ENCODE measurements at regions of chr5 and their contacts with region 1.

Region 1: GRCh38 chr5:81194633-81195333 is 38.3 kb upstream of the CKMT2 start:
- DNase-seq: peak; percentile 89
- ATAC-seq: peak; percentile 99
- H3K4me3 Mint-ChIP-seq: peak overlapping the region; percentile 4
- H3K27ac Mint-ChIP-seq: no peak overlapping the region
- H3K4me1 Mint-ChIP-seq: peaks cover 8% of the 10 kb centered on the region
- H3K27me3 Mint-ChIP-seq: no peaks in the 10 kb centered on the region
- CTCF ChIP-seq: peak; percentile 97

Region 2: DNA sequence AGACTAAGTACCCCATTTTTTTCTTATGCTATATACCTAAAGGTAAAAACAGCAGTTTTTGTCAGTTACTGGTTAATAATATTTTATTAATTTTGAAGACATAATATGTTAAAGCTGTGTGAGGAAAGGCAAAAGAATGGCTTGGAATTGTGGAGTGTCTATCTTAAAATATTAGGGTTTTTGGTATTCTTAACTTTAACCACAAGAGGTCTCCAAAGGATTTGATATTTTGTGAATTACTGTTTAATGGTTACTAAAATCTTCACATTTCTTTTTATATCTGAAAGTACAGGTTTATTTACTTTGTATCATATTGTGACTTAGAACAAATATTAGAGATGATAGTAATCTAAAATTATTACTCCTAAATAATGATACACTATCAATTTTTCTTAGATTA is 508.0 kb before region 1 on chr5:
- CTCF ChIA-PET with region 1: interaction called, 7 read pairs
- POLR2A ChIA-PET with region 1: no interaction called
- intact Hi-C with region 1: loop called (anchors 10 kb)
- DNase-seq: no peak
- ATAC-seq: no peak
- H3K4me3 Mint-ChIP-seq: no peak overlapping the region
- H3K27ac Mint-ChIP-seq: no peak overlapping the region
- H3K4me1 Mint-ChIP-seq: peaks cover 19% of the 10 kb centered on the region
- H3K27me3 Mint-ChIP-seq: no peaks in the 10 kb centered on the region
- CTCF ChIP-seq: peak; percentile 25

Region 3: GRCh38 chr5:81183811-81184748 is 10.7 kb before region 1 on chr5:
- CTCF ChIA-PET with region 1: interaction called, 56 read pairs
- POLR2A ChIA-PET with region 1: no interaction called
- intact Hi-C with region 1: no loop called
- DNase-seq: no peak
- ATAC-seq: no peak
- H3K4me3 Mint-ChIP-seq: no peak overlapping the region
- H3K27ac Mint-ChIP-seq: no peak overlapping the region
- H3K4me1 Mint-ChIP-seq: peaks cover 22% of the 10 kb centered on the region
- H3K27me3 Mint-ChIP-seq: no peaks in the 10 kb centered on the region
- CTCF ChIP-seq: no peak

Region 4: GRCh38 chr5:81207009-81207408 is 12.2 kb after region 1 on chr5:
- CTCF ChIA-PET with region 1: interaction called, 27 read pairs
- POLR2A ChIA-PET with region 1: interaction called, 3 read pairs
- intact Hi-C with region 1: no loop called
- DNase-seq: peak; percentile 20
- ATAC-seq: no peak
- H3K4me3 Mint-ChIP-seq: no peak overlapping the region
- H3K27ac Mint-ChIP-seq: no peak overlapping the region
- H3K4me1 Mint-ChIP-seq: peaks cover 5% of the 10 kb centered on the region
- H3K27me3 Mint-ChIP-seq: no peaks in the 10 kb centered on the region
- CTCF ChIP-seq: no peak

Region 5: DNA sequence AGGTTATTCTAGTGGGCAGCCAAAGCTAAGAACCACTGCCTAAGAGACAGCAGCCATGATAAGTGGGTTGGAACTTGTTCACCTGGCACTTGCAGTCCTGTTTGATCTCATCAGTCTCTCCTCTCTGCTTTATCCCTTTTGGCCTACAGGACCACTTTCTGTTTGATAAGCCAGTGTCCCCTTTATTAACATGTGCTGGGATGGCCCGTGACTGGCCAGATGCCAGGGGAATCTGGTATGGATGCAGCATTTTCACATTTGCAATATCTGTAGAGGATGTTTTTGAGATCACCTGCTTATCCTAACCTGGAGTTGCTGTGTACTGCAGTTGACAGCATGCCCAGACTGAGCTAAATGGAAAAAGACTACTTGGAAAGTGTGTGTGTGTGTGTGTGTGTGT is 62.0 kb after region 1 on chr5:
- CTCF ChIA-PET with region 1: no interaction called
- POLR2A ChIA-PET with region 1: no interaction called
- intact Hi-C with region 1: no loop called
- DNase-seq: no peak
- ATAC-seq: no peak
- H3K4me3 Mint-ChIP-seq: no peak overlapping the region
- H3K27ac Mint-ChIP-seq: no peak overlapping the region
- H3K4me1 Mint-ChIP-seq: no peaks in the 10 kb centered on the region
- H3K27me3 Mint-ChIP-seq: no peaks in the 10 kb centered on the region
- CTCF ChIP-seq: no peak